ENCODE measurements at regions of chr1 and their contacts with region 1.

Region 1: GRCh38 chr1:159891275-159892157 is 8.4 kb downstream of the CFAP45 start:
- DNase-seq: peak; percentile 83
- ATAC-seq: peak; percentile 89
- H3K4me3 ChIP-seq: no peak overlapping the region
- H3K27ac ChIP-seq: no peak overlapping the region
- H3K4me1 ChIP-seq: peaks cover 19% of the 10 kb centered on the region
- H3K27me3 ChIP-seq: 0 out of 4 replicates have a peak, but pooled peaks cover 0 to 2% of the 10 kb centered on the region in 2 experiments
- CTCF ChIP-seq: peak; percentile 97 to 100 (median 99); a peak in 5 of 6 replicates
- EP300 ChIP-seq: no peak
- POLR2A ChIP-seq: no peak
- RAD21 ChIP-seq: peak; percentile 99

Region 2: DNA sequence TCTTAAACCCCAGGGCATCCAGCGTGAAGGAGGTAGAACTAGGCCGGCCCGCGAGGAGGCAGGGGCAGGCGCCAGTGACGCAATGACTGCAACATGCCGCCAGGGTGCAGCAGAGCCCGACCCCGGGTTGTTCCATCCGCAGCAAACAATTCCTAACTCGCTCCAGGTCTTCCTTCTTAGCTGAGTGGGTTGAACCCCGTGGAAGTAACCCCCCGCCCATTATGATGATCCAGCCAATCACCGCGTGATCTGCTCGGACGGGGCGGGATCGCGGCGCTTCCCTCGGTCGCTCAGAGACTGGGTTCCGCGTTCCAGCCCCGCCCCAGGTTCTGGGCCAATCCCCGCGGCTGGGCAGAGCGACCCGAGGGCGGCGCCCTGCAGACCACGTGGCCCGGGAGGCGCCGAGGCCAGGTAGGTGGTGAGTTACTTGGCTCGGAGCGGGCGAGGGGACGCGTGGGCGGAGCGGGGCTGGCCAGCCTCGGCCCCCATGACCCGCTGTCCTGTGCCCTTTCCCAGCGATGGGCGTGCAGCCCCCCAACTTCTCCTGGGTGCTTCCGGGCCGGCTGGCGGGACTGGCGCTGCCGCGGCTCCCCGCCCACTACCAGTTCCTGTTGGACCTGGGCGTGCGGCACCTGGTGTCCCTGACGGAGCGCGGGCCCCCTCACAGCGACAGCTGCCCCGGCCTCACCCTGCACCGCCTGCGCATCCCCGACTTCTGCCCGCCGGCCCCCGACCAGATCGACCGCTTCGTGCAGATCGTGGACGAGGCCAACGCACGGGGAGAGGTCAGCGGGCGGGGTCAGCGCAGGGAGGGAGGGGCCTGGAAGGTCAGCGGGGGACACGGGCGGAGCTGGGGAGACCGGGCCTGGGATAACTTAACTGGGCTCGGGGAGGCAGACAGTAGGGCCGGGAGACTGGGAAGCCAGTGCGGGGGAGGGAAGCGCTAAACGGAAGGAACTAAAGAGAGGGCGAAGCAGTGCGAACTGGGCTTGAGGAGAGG is 110.6 kb before region 1 on chr1 and contains the start of gene DUSP23:
- CTCF ChIA-PET with region 1: interaction called, 7 read pairs
- POLR2A ChIA-PET with region 1: no interaction called
- RAD21 ChIA-PET with region 1: interaction called, 7 read pairs
- SMC1A ChIA-PET with region 1: interaction called, 7 read pairs
- in situ Hi-C with region 1: no loop called
- intact Hi-C with region 1: loop called (anchors 1 kb)
- DNase-seq: peak; percentile 81
- ATAC-seq: peak; percentile 100
- H3K4me3 ChIP-seq: peak within 1 kb of the TSS; percentile 29
- H3K27ac ChIP-seq: no peak within 1 kb of the TSS
- H3K4me1 ChIP-seq: no peaks in the 10 kb centered on the region
- H3K27me3 ChIP-seq: no peaks in the 10 kb centered on the region
- CTCF ChIP-seq: peak; percentile 78 to 81 (median 81)
- EP300 ChIP-seq: no peak
- POLR2A ChIP-seq: peak; percentile 76
- RAD21 ChIP-seq: peak; percentile 44; the same call in 1 of the 2 replicates
- polyA plus RNA-seq, gene DUSP23: 1.1 TPM in 1 of 2 experiments, not detected in the other

Region 3: GRCh38 chr1:159803956-159804689 is 87.4 kb before region 1 on chr1:
- CTCF ChIA-PET with region 1: interaction called, 476 read pairs
- POLR2A ChIA-PET with region 1: interaction called, 13 read pairs
- RAD21 ChIA-PET with region 1: interaction called, 153 read pairs
- SMC1A ChIA-PET with region 1: interaction called, 289 read pairs
- in situ Hi-C with region 1: loop called (anchors 5 kb)
- intact Hi-C with region 1: loop called (anchors 1 kb)
- DNase-seq: no peak
- ATAC-seq: no peak
- H3K4me3 ChIP-seq: no peak overlapping the region
- H3K27ac ChIP-seq: no peak overlapping the region
- H3K4me1 ChIP-seq: peaks cover 9% of the 10 kb centered on the region
- H3K27me3 ChIP-seq: peaks cover 0 to 6% of the 10 kb centered on the region in 2 experiments; a peak in 3 of 4 replicates
- CTCF ChIP-seq: no peak
- EP300 ChIP-seq: no peak
- POLR2A ChIP-seq: no peak
- RAD21 ChIP-seq: no peak

Region 4: GRCh38 chr1:159839116-159839849 is 52.2 kb before region 1 on chr1:
- CTCF ChIA-PET with region 1: interaction called, 9 read pairs
- POLR2A ChIA-PET with region 1: no interaction called
- RAD21 ChIA-PET with region 1: interaction called, 4 read pairs
- SMC1A ChIA-PET with region 1: interaction called, 13 read pairs
- in situ Hi-C with region 1: no loop called
- intact Hi-C with region 1: loop called (anchors 2 kb)
- DNase-seq: peak; percentile 36
- ATAC-seq: peak; percentile 88
- H3K4me3 ChIP-seq: no peak overlapping the region; the same call in 1 of the 2 replicates
- H3K27ac ChIP-seq: peak overlapping the region; percentile 68
- H3K4me1 ChIP-seq: peaks cover 26% of the 10 kb centered on the region
- H3K27me3 ChIP-seq: peaks cover 0 to 4% of the 10 kb centered on the region in 2 experiments; a peak in 1 of 4 replicates
- CTCF ChIP-seq: no peak
- EP300 ChIP-seq: no peak
- POLR2A ChIP-seq: no peak
- RAD21 ChIP-seq: no peak

Region 5: DNA sequence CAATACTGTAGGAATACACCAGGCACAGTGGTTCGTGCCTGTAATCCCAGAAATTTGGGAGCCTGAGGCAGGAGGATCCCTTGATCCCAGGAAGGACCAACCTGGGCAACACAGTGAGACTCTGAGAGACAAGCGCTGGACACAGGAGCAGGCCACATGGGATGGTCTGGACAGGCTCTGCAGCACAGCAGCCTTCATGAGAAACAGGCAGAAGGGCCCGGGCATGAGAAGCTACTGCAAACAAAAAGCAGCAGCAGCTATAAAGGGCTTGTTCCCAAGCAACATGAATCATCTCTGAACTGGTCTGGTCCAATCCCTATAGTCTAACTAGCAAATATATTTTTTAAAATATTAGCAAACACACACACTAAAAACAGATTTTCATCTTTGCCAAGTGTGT is 98.1 kb after region 1 on chr1:
- CTCF ChIA-PET with region 1: no interaction called
- POLR2A ChIA-PET with region 1: no interaction called
- RAD21 ChIA-PET with region 1: no interaction called
- SMC1A ChIA-PET with region 1: no interaction called
- in situ Hi-C with region 1: no loop called
- intact Hi-C with region 1: no loop called
- DNase-seq: no peak
- ATAC-seq: no peak
- H3K4me3 ChIP-seq: no peak overlapping the region
- H3K27ac ChIP-seq: no peak overlapping the region
- H3K4me1 ChIP-seq: no peaks in the 10 kb centered on the region
- H3K27me3 ChIP-seq: peaks cover 0 to 2% of the 10 kb centered on the region in 2 experiments; a peak in 1 of 4 replicates
- CTCF ChIP-seq: no peak
- EP300 ChIP-seq: no peak
- POLR2A ChIP-seq: no peak
- RAD21 ChIP-seq: no peak

Region 6: DNA sequence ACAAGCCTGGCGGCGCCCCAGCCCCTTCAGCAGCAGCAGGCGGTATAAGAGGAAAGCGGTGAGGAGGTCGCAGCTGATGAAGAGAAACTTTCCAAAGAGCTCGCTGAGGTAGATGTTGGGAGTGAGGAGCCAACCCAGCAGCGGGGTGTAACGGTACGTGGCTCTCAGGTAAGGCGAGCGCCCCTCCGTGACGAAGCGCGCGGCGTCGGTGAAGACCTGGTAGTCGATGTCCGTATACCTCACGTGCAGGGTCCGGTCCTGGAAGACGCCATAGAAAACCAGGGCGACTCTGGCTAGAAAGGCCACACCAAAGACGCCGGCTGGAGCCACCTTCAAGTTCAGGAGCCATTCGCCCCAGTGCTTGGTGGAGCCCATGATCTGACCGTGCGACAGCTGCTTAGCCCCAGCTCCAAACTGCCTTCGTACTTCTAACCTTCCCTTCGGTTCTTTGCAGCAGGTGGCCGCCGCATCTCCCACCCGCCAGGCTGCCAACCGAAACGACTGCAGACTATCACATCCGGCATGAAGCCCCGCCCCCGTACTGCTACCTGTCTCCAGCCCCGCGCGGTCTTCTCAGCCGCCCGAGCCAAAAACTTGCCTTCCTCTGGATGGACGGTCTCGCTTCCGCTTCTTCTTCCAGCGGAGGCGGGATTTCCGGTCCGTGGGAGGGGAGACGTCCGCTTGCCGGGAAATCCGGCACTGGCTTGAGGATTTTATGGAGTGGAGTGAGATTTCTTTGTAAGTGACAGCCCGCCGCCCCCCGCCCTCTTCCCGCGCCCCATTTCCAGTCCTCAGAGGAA is 140.0 kb after region 1 on chr1 and contains the start of gene PIGM:
- CTCF ChIA-PET with region 1: interaction called, 12 read pairs
- POLR2A ChIA-PET with region 1: no interaction called
- RAD21 ChIA-PET with region 1: no interaction called
- SMC1A ChIA-PET with region 1: interaction called, 7 read pairs
- in situ Hi-C with region 1: no loop called
- intact Hi-C with region 1: no loop called
- DNase-seq: peak; percentile 66
- ATAC-seq: peak; percentile 97
- H3K4me3 ChIP-seq: peak within 1 kb of the TSS; percentile 97
- H3K27ac ChIP-seq: peak within 1 kb of the TSS; percentile 48
- H3K4me1 ChIP-seq: peaks cover 5% of the 10 kb centered on the region; the same call in 1 of the 2 replicates
- H3K27me3 ChIP-seq: no peaks in the 10 kb centered on the region
- CTCF ChIP-seq: no peak
- EP300 ChIP-seq: no peak
- POLR2A ChIP-seq: peak; percentile 79
- RAD21 ChIP-seq: no peak
- polyA plus RNA-seq, gene PIGM: 2.6 to 3.7 TPM